ENCODE measurements at regions of chr10 and their contacts with region 1.

Region 1: GRCh38 chr10:103859161-103860086 is 4.0 kb upstream of the SH3PXD2A start:
- DNase-seq: peak; percentile 16 to 67 (median 46)
- ATAC-seq: peak; percentile 74
- H3K4me3 ChIP-seq: no peak overlapping the region
- H3K4me3 Mint-ChIP-seq: no peak overlapping the region
- H3K27ac ChIP-seq: no peak overlapping the region
- H3K27ac Mint-ChIP-seq: no peak overlapping the region
- H3K4me1 ChIP-seq: peaks cover 0 to 7% of the 10 kb centered on the region in 2 donors
- H3K4me1 Mint-ChIP-seq: peaks cover 3 to 13% (median 11%) of the 10 kb centered on the region in 7 donors
- H3K27me3 ChIP-seq: peaks cover 3 to 5% of the 10 kb centered on the region in 2 donors
- H3K27me3 Mint-ChIP-seq: peaks cover 12 to 58% (median 16%) of the 10 kb centered on the region in 5 donors

Region 2: DNA sequence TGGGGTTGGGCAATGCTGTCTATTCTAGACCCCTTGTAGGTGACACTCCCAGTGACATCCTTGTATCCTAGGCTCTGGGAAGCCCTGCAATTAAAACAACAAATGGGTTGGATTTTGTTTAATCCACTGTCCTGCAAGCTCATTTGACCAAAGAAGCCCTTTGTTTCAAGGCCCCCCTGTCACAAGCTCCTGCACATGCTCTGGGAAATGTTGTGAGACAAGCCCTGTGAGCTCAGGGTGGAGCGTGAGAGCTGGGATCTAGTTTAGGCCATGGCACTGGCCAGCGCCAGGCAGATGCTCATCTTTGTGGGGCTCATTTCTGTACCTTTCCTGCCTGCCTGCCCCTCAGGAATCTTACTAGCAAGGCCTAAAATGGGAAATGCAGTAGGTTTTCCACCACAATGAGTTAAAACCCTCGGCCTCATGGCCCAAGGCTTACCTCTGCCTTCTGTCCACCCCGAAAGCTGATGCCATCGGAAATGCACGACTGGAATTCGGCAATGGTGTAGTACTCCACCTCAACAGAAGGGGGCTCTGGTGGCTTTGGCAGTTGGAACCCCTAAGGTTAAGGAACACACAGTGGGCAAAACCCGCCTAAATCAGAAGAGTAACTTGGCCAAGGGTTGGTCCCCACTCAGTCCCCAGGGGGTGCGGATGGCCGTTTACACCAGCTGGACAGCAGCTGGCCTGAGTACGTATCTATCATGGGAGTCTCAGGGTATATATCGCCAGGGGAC is 253.9 kb before region 1 on chr10:
- CTCF ChIA-PET with region 1: no interaction called
- POLR2A ChIA-PET with region 1: no interaction called
- intact Hi-C with region 1: loop called in 1 of 2 experiments (anchors 10 kb)
- DNase-seq: peak in 8 of 9 donors; percentile 12 to 51 (median 27)
- ATAC-seq: peak; percentile 56
- H3K4me3 ChIP-seq: no peak overlapping the region
- H3K4me3 Mint-ChIP-seq: no peak overlapping the region
- H3K27ac ChIP-seq: no peak overlapping the region
- H3K27ac Mint-ChIP-seq: no peak overlapping the region
- H3K4me1 ChIP-seq: no peaks in the 10 kb centered on the region
- H3K4me1 Mint-ChIP-seq: no peaks in the 10 kb centered on the region
- H3K27me3 ChIP-seq: no peaks in the 10 kb centered on the region
- H3K27me3 Mint-ChIP-seq: no peaks in the 10 kb centered on the region

Region 3: DNA sequence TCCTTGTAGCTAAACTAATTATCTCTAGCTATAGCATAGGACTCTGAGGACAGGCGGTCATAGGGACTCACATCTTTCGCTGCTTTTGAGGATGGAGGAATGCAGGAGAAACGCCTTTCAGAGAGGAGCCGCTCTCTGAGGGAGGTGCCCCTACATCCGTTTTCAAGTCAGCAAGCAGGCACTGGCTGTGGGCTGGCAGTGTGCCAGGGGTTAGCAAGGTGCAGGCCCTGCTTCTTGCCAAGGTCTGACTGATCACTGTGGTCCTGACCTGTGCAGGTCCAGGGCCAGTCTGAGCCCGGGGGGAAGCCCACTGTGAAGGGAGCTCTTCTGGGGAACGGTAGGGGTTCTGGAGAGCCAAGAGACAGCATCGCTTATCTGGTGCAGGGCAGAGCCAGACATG is 93.4 kb before region 1 on chr10:
- CTCF ChIA-PET with region 1: interaction called, 3 read pairs
- POLR2A ChIA-PET with region 1: interaction called, 8 read pairs
- intact Hi-C with region 1: loop called in 1 of 2 experiments (anchors 5 kb)
- DNase-seq: peak in 8 of 9 donors; percentile 69 to 85 (median 78)
- ATAC-seq: peak; percentile 71
- H3K4me3 ChIP-seq: peak overlapping the region; percentile 40
- H3K4me3 Mint-ChIP-seq: peak overlapping the region; percentile 47 to 87 (median 75)
- H3K27ac ChIP-seq: no peak overlapping the region
- H3K27ac Mint-ChIP-seq: peak overlapping the region in 8 of 9 donors; percentile 52 to 87 (median 72)
- H3K4me1 ChIP-seq: peaks cover 42 to 54% of the 10 kb centered on the region in 2 donors
- H3K4me1 Mint-ChIP-seq: peaks cover 45 to 86% (median 67%) of the 10 kb centered on the region in 7 donors
- H3K27me3 ChIP-seq: no peaks in the 10 kb centered on the region
- H3K27me3 Mint-ChIP-seq: peaks cover 0 to 27% (median 0%) of the 10 kb centered on the region in 5 donors

Region 4: DNA sequence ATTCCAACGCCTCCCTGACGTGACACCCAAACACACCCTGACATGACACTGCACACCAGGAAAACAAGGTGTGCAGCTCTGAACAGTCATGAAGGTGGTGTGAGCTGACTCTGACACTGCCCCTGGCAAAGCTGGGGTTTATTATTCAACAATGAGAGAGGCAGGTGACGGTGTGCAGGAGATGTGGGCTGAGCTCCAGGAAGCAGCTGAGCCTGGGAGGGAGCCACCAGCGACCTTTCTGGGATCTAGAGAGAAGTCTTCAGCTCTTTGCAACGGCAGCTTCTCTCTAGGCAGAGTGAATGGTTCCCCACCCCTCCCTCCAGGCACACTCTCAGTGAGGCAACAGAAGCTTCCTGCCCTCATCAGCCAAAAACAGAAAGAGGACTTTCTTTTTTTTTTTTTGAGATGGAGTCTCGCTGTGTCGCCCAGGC is 69.6 kb before region 1 on chr10:
- CTCF ChIA-PET with region 1: interaction called, 11 read pairs
- POLR2A ChIA-PET with region 1: no interaction called
- intact Hi-C with region 1: loop called in 1 of 2 experiments (anchors 10 kb)
- DNase-seq: peak in 6 of 9 donors; percentile 8 to 44 (median 40)
- ATAC-seq: peak; percentile 60
- H3K4me3 ChIP-seq: no peak overlapping the region
- H3K4me3 Mint-ChIP-seq: peak overlapping the region in 7 of 10 donors; percentile 0 to 61 (median 20)
- H3K27ac ChIP-seq: no peak overlapping the region
- H3K27ac Mint-ChIP-seq: peak overlapping the region in 7 of 9 donors; percentile 19 to 81 (median 68)
- H3K4me1 ChIP-seq: peaks cover 0 to 7% of the 10 kb centered on the region in 2 donors
- H3K4me1 Mint-ChIP-seq: peaks cover 0 to 14% (median 11%) of the 10 kb centered on the region in 7 donors
- H3K27me3 ChIP-seq: no peaks in the 10 kb centered on the region
- H3K27me3 Mint-ChIP-seq: peaks cover 0 to 15% (median 0%) of the 10 kb centered on the region in 5 donors

Region 5: DNA sequence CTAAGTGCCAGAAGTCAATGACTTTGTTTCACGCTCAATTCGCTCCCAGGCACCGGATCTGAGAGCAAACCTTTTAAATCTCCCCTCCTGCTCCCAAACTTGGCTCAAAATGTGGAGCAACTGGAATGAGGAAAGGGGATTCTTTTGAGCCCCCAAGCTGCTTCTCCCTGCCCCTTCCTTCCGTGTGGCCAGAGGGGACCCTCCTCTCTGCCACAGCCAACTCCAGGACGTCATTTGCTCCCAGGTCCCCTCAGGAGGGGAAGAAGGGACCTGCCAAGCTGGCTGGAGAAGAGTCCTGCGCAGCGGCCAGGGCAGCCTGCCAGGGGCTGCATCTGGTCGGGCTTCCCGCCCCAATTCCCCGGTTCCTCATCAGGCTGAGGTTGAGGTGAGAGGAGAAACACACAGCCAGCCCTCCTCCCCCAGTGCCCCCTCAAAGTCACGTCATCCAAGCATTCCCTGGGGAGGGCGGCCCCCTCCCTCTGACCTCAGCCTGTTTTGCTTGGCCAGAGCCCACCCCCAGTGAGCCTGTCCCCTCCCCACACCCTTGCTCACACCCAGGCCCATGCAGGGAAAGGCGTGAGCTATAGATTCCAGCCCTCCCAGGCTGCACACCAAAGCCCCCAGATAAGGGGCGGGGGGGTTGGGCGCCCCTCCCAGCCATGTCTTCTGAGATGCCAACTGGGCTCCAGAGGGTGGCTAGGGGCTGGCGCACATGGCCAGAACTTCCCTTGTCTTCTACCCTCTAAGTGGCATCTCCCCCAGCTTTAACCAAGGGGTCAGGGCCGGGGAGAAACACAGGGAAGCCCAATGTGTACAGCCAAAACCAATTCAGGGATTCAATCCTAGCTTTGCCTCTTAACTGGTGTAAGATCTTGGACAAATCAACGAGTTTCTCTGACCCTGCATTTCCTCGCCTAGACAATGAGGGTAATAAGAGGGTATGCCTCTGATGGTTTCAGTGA is 39.0 kb before region 1 on chr10:
- CTCF ChIA-PET with region 1: no interaction called
- POLR2A ChIA-PET with region 1: no interaction called
- intact Hi-C with region 1: no loop called
- DNase-seq: no peak
- ATAC-seq: no peak
- H3K4me3 ChIP-seq: no peak overlapping the region
- H3K4me3 Mint-ChIP-seq: no peak overlapping the region
- H3K27ac ChIP-seq: no peak overlapping the region
- H3K27ac Mint-ChIP-seq: no peak overlapping the region
- H3K4me1 ChIP-seq: no peaks in the 10 kb centered on the region
- H3K4me1 Mint-ChIP-seq: peaks cover 0 to 5% (median 0%) of the 10 kb centered on the region in 7 donors
- H3K27me3 ChIP-seq: no peaks in the 10 kb centered on the region
- H3K27me3 Mint-ChIP-seq: peaks cover 12 to 59% (median 16%) of the 10 kb centered on the region in 5 donors

Region 6: GRCh38 chr10:103833731-103834365 is 25.6 kb before region 1 on chr10:
- CTCF ChIA-PET with region 1: no interaction called
- POLR2A ChIA-PET with region 1: no interaction called
- intact Hi-C with region 1: no loop called
- DNase-seq: no peak
- ATAC-seq: no peak
- H3K4me3 ChIP-seq: no peak overlapping the region
- H3K4me3 Mint-ChIP-seq: no peak overlapping the region
- H3K27ac ChIP-seq: no peak overlapping the region
- H3K27ac Mint-ChIP-seq: no peak overlapping the region
- H3K4me1 ChIP-seq: no peaks in the 10 kb centered on the region
- H3K4me1 Mint-ChIP-seq: no peaks in the 10 kb centered on the region
- H3K27me3 ChIP-seq: no peaks in the 10 kb centered on the region
- H3K27me3 Mint-ChIP-seq: peaks cover 0 to 23% (median 0%) of the 10 kb centered on the region in 5 donors

Region 7: DNA sequence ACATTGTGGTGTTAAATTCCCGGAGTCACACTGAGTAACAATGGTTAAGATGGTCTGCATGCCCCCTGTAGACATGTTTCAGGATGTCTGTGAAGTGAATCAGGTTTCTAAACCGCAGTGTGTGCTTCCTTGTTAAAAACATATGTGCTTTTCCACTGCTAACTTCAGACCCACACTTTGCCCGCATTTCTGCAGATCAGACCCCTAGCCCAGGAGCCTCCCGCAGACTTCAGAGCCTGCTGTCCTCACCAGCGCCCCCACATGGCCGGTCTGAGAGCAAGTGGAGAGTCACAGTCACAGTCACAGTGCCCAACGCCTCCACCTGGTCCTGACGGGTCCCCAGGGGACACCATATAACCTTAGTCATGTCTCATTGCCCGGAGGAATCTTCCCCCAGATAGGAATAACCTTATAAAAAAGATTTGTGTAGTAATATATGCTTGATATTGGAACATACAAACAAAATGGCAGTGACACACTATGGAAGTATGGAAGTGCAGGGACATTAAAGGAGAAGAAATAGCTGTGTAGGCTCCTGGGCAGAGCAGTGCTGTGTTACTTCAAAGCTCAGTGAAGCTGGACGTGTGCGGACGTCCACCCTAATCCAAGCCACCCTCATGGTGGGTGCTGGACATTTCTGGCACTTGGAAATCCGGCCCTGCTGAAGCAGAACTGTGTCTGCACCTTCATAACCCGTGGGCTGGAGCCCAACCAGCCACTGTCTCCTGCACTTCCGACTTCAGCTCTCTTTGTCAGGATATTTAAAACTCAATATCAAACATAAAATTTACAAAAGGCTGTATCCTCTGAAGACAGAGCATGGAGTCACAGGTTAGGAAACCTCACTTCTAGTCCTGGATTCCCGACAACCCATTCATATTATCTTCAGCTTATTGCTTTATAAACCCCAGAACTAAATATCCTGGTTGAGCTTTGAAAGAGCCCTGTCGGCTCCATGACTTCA is 438.6 kb after region 1 on chr10:
- CTCF ChIA-PET with region 1: no interaction called
- POLR2A ChIA-PET with region 1: no interaction called
- intact Hi-C with region 1: no loop called
- DNase-seq: no peak
- ATAC-seq: peak; percentile 35
- H3K4me3 ChIP-seq: no peak overlapping the region
- H3K4me3 Mint-ChIP-seq: peak overlapping the region in 1 of 10 donors; percentile 34
- H3K27ac ChIP-seq: no peak overlapping the region
- H3K27ac Mint-ChIP-seq: peak overlapping the region in 6 of 9 donors; percentile 7 to 62 (median 36)
- H3K4me1 ChIP-seq: peaks cover 4 to 13% of the 10 kb centered on the region in 2 donors
- H3K4me1 Mint-ChIP-seq: peaks cover 6 to 36% (median 29%) of the 10 kb centered on the region in 7 donors
- H3K27me3 ChIP-seq: no peaks in the 10 kb centered on the region
- H3K27me3 Mint-ChIP-seq: peaks cover 0 to 5% (median 0%) of the 10 kb centered on the region in 5 donors